Vagina (tissue), 2 donors: ENCODE measurements at regions of chr17 and their contacts with region 1.

Region 1: GRCh38 chr17:56939901-56940343 is 20.9 kb downstream of the COIL start:
- DNase-seq: no peak
- H3K4me3 ChIP-seq: no peak overlapping the region
- H3K27ac ChIP-seq: no peak overlapping the region
- H3K4me1 ChIP-seq: peaks cover 22% of the 10 kb centered on the region
- H3K27me3 ChIP-seq: no peaks in the 10 kb centered on the region
- CTCF ChIP-seq: peak; percentile 73 to 81 (median 75)
- POLR2A ChIP-seq: no peak

Region 2: DNA sequence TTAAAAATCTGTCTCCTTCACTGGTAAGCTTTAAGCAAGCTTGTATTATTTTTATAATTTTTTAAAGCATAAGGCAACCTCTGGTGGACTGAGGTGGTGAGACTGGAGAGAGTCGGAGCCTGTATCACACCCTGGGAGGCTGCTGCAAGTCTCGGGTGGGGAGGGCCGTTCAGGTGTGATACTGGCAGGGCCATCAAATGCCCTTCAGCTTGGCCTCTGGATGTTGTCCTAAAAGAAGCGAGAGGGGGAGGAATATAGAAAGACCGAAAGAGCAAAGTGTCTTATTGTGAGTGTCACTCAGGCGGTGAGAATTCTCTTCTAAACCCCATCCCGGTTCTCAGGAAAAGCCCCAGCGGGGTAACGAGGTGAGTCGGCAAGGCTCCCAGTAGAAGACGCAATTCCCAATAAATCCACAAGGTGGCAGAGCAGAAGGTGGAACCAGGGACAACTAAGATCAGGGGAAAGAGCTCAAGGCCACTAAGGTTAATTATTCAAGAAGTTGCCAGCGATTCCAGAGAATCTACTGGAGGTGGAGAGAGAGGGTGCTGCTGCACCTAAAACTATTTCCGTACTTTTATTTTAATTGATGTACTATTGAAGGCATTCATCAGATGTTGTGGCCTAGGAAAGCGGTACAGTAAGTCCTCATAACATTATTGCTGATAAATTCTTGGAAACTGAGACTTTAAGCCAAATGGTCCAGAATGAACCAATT is 120.3 kb before region 1 on chr17:
- intact Hi-C with region 1: loop called (anchors 5 kb)
- DNase-seq: peak in 1 of 2 donors; percentile 81
- H3K4me3 ChIP-seq: no peak overlapping the region
- H3K27ac ChIP-seq: no peak overlapping the region
- H3K4me1 ChIP-seq: peaks cover 9% of the 10 kb centered on the region
- H3K27me3 ChIP-seq: no peaks in the 10 kb centered on the region
- CTCF ChIP-seq: peak; percentile 67 to 82 (median 81)
- POLR2A ChIP-seq: no peak

Region 3: DNA sequence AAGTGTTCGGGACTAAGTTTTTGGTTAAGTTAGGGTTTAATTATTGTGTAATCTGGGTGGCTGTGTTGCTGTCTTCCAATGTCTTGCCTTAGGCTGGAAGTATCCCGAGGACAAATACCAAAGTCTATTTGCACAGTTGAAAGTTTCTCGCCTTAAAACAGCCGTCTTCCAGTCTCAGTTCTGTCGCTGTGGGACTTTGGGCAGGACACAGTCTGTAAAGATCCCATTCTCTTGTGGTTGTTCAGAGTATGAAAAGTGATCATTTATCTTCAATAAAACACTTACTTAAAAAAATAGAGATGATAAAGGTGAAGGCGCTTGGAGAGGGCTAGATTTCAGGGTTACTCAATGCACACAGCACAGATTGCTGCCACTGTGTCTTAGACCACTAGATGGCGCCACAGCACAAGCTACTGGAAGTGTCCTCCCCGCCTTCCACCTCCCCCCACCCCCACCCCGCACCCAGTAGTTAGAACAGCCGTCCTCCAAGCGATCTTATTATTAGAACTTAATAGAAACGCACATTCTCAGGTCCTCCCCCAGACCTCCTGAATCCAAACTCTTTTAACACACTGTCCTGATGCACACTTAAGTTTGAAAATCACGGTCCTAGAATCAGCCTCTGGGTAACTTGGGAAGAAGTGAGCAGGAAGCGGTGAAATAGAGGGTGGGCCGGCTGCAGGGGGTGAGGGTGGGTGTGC is 191.0 kb after region 1 on chr17:
- intact Hi-C with region 1: no loop called
- DNase-seq: no peak
- H3K4me3 ChIP-seq: no peak overlapping the region
- H3K27ac ChIP-seq: no peak overlapping the region
- H3K4me1 ChIP-seq: no peaks in the 10 kb centered on the region
- H3K27me3 ChIP-seq: no peaks in the 10 kb centered on the region
- CTCF ChIP-seq: peak; percentile 39 to 89 (median 52)
- POLR2A ChIP-seq: no peak